Aorta (tissue), 5 donors: ENCODE measurements at regions of chr12 and their contacts with region 1.

Region 1: GRCh38 chr12:75977952-75978671 is 53.5 kb downstream of the PHLDA1 start:
- DNase-seq: peak in 1 of 2 donors; percentile 82
- ATAC-seq: peak; percentile 94
- H3K4me3 ChIP-seq: no peak overlapping the region
- H3K27ac ChIP-seq: peak overlapping the region; percentile 90 to 92
- H3K4me1 ChIP-seq: peaks cover 7 to 10% of the 10 kb centered on the region in 2 donors
- H3K27me3 ChIP-seq: no peaks in the 10 kb centered on the region

Region 2: DNA sequence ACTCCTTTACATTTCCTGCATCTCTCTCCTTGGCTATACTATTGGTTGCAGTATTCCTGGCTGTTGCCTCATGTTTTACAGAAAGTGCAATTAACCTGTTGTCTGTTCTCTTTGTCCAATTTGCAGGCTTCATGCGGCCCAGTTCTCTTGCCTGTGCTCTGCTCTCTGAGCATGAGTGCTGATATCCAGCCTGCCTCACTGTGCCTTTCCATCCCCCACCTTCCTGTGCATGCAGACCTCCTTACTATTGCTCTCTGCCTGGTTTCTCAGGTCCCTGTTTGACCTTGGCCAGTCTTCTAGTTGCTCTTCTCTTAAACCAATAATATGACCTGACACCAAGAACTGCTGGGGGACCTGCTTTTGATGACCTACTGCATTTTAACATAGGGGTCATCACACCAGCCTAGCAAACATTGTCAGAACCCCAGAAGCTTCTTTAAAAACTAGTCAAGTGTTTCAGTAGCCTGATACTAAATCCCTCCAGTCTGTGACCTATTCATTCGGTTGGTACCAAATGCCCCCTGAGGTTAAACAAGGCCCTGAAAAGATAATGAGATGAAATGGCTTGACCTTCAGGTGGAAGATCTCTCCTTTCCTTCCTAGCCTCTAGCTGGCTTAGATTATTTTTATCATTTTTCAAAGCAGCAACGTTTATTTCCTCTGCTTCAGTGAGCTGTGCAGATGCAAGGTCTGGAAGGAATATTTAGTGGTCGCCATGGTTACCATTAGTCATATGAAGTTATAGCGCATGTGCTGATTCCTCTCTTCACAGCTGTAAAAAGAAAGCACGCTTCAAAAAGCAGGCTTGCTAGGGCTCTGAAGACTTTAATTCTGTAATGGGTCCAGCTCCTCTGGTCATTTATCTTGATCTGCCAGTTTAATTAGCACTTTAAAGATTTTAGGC is 163.0 kb before region 1 on chr12:
- intact Hi-C with region 1: loop called in 1 of 2 experiments (anchors 10 kb)
- DNase-seq: no peak
- ATAC-seq: peak; percentile 90
- H3K4me3 ChIP-seq: no peak overlapping the region
- H3K27ac ChIP-seq: peak overlapping the region; percentile 80 to 92
- H3K4me1 ChIP-seq: peaks cover 5 to 8% of the 10 kb centered on the region in 2 donors
- H3K27me3 ChIP-seq: no peaks in the 10 kb centered on the region

Region 3: GRCh38 chr12:76049575-76050251 is 71.6 kb after region 1 on chr12:
- intact Hi-C with region 1: no loop called
- DNase-seq: no peak
- ATAC-seq: no peak
- H3K4me3 ChIP-seq: no peak overlapping the region
- H3K27ac ChIP-seq: no peak overlapping the region
- H3K4me1 ChIP-seq: no peaks in the 10 kb centered on the region
- H3K27me3 ChIP-seq: no peaks in the 10 kb centered on the region